ENCODE measurements at regions of chr22 and their contacts with region 1.

Region 1: GRCh38 chr22:38941488-38941987 is 15.9 kb upstream of the APOBEC3A start:
- DNase-seq: peak; percentile 31
- H3K4me3 Mint-ChIP-seq: peak overlapping the region; percentile 70
- H3K27ac Mint-ChIP-seq: peak overlapping the region; percentile 68
- H3K4me1 Mint-ChIP-seq: peaks cover 28% of the 10 kb centered on the region
- H3K27me3 Mint-ChIP-seq: peaks cover 29% of the 10 kb centered on the region

Region 2: DNA sequence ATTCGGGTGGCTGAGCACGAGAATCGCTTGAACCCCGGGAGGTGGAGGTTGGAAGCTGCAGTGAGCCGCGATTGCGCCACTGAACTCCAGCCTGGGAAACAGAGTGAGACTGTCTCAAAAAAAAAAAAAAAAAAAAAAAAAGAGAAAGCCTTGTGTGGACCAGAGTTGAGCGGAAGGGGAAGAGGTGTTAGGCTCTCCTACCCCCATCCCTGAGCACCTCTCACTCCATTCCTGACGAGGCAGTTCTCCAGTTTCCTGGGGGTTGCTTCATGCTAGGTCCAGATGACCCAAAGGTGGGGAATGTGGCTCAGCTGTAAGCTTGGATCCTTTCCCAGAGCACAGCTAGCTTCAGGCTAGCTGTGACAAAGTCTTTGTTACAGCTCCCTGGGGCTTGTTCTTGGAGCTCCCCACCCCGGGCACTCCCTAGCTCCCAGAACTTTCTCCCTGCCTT is 138.8 kb before region 1 on chr22:
- CTCF ChIA-PET with region 1: no interaction called
- POLR2A ChIA-PET with region 1: no interaction called
- DNase-seq: no peak
- H3K4me3 Mint-ChIP-seq: no peak overlapping the region
- H3K27ac Mint-ChIP-seq: no peak overlapping the region
- H3K4me1 Mint-ChIP-seq: peaks cover 11% of the 10 kb centered on the region
- H3K27me3 Mint-ChIP-seq: peaks cover 17% of the 10 kb centered on the region

Region 3: GRCh38 chr22:38953577-38954413 is 12.3 kb after region 1 on chr22:
- CTCF ChIA-PET with region 1: interaction called, 10 read pairs
- POLR2A ChIA-PET with region 1: no interaction called
- DNase-seq: peak; percentile 69
- H3K4me3 Mint-ChIP-seq: peak overlapping the region; percentile 25
- H3K27ac Mint-ChIP-seq: peak overlapping the region; percentile 71
- H3K4me1 Mint-ChIP-seq: peaks cover 27% of the 10 kb centered on the region
- H3K27me3 Mint-ChIP-seq: no peaks in the 10 kb centered on the region